Panc1 (cell line): ENCODE measurements at regions of chr5 and their contacts with region 1.

Region 1: DNA sequence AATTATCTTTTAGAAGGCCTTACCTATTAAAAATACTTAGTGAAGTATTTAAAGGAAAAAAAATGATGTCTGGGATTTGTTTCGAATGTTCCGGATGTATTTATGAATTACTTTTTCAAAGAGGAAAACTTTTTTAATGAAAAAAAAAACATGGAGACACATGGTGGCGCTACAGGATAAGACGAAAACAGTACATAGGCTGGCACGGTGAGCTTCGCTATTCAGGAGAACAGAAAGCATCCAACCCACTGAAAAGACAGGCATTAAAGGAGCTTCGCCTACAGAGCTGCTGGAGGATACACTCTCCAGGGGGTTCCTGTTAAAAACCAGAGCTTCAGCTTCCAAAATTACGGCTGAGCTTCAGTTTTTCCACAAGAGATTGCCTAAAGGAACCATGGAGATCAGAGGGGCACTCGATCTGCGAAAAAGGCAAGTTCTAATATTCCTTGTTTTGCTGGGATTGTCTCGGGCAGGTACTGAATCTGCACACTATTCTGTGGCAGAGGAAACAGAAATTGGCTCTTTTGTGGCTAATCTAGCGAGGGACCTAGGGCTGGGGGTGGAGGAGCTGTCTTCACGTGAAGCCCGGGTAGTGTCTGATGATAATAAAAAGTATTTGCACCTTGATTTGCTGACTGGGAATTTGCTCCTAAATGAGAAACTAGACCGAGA is at the start of gene PCDHB14:
- DNase-seq: peak; percentile 22
- ATAC-seq: peak; percentile 94
- H3K4me3 ChIP-seq: peak within 1 kb of the TSS; percentile 35 to 51
- H3K27ac ChIP-seq: no peak within 1 kb of the TSS
- H3K4me1 ChIP-seq: no peaks in the 10 kb centered on the region
- H3K27me3 ChIP-seq: peaks cover 3% of the 10 kb centered on the region; the same call in 1 of the 2 replicates
- CTCF ChIP-seq: peak; percentile 72
- total RNA-seq, gene PCDHB14: 0.80 TPM

Region 2: GRCh38 chr5:141326088-141326854 is 103.0 kb after region 1 on chr5:
- CTCF ChIA-PET with region 1: interaction called, 11 read pairs
- POLR2A ChIA-PET with region 1: no interaction called
- in situ Hi-C with region 1: no loop called
- intact Hi-C with region 1: no loop called
- DNase-seq: no peak
- ATAC-seq: peak; percentile 94
- H3K4me3 ChIP-seq: peak overlapping the region; percentile 50 to 77
- H3K27ac ChIP-seq: peak overlapping the region; percentile 73
- H3K4me1 ChIP-seq: no peaks in the 10 kb centered on the region
- H3K27me3 ChIP-seq: no peaks in the 10 kb centered on the region
- CTCF ChIP-seq: peak; percentile 82

Region 3: DNA sequence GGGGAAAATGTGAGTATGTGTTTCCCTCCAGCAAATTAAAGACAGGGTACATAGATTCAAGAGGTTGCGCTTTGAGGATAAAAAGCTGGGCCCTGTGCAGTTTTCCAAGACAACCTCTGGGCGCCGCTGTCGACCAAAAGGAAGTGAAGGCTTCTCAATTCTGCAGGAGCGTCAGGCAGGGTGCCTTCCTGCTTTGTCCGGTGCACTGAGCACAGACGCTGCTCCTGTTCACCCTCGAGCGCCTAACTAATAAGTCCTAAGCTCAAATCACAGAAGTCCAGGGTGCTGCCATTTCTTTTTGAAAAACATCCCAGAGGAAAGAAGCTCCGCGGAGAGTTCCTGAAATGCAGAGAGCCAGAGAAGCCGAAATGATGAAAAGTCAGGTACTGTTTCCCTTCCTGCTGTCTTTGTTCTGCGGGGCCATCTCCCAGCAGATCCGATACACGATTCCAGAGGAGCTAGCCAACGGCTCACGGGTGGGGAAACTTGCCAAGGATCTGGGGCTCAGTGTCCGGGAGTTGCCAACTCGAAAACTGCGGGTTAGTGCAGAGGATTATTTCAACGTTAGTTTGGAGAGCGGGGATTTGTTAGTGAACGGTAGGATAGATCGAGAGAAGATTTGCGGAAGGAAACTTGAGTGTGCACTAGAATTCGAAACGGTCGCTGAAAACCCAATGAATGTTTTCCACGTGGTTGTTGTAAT is 126.8 kb after region 1 on chr5 and contains the start of gene PCDHGB1:
- CTCF ChIA-PET with region 1: interaction called, 10 read pairs
- POLR2A ChIA-PET with region 1: no interaction called
- in situ Hi-C with region 1: no loop called
- intact Hi-C with region 1: no loop called
- DNase-seq: no peak
- ATAC-seq: peak; percentile 97
- H3K4me3 ChIP-seq: peak within 1 kb of the TSS; percentile 51 to 68
- H3K27ac ChIP-seq: peak within 1 kb of the TSS; percentile 5; the same call in 1 of the 2 replicates
- H3K4me1 ChIP-seq: no peaks in the 10 kb centered on the region
- H3K27me3 ChIP-seq: no peaks in the 10 kb centered on the region; the same call in 1 of the 2 replicates
- CTCF ChIP-seq: peak; percentile 81
- total RNA-seq, gene PCDHGB1: 2.0 TPM

Region 4: GRCh38 chr5:141557681-141558136 is 334.5 kb after region 1 on chr5:
- CTCF ChIA-PET with region 1: interaction called, 12 read pairs
- POLR2A ChIA-PET with region 1: interaction called, 3 read pairs
- in situ Hi-C with region 1: no loop called
- intact Hi-C with region 1: loop called (anchors 5 kb)
- DNase-seq: peak; percentile 82
- ATAC-seq: peak; percentile 92
- H3K4me3 ChIP-seq: peak overlapping the region; percentile 26 to 54
- H3K27ac ChIP-seq: peak overlapping the region; percentile 84
- H3K4me1 ChIP-seq: peaks cover 17% of the 10 kb centered on the region
- H3K27me3 ChIP-seq: no peaks in the 10 kb centered on the region
- CTCF ChIP-seq: peak; percentile 92

Region 5: DNA sequence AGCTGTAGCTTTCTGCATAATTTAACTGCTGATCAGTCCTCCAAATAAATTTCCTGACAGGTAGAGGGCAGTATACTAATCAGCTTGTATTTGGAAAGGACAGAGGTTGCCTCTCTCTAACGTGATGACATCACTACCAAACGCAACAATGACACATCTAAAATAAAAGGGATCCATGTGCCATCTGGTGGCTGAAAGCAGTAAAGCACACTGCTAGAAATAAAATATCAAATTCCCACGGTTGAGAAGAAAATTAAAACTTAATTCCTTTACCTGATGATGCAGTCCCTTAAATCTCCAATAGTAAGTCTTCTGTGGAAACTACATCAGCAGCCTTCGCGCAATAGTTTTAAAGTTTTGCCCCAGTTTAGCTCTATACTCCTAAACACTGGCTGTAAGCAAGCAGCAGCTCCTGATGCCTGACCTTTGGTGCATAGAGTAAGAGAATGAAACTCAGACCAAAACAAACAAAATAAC is 341.0 kb after region 1 on chr5:
- CTCF ChIA-PET with region 1: interaction called, 9 read pairs
- POLR2A ChIA-PET with region 1: no interaction called
- in situ Hi-C with region 1: no loop called
- intact Hi-C with region 1: loop called (anchors 5 kb)
- DNase-seq: peak; percentile 87
- ATAC-seq: peak; percentile 90
- H3K4me3 ChIP-seq: no peak overlapping the region
- H3K27ac ChIP-seq: peak overlapping the region; percentile 83
- H3K4me1 ChIP-seq: peaks cover 12% of the 10 kb centered on the region
- H3K27me3 ChIP-seq: no peaks in the 10 kb centered on the region
- CTCF ChIP-seq: peak; percentile 91

Region 6: GRCh38 chr5:141713616-141714309 is 490.5 kb after region 1 on chr5:
- CTCF ChIA-PET with region 1: no interaction called
- POLR2A ChIA-PET with region 1: no interaction called
- in situ Hi-C with region 1: no loop called
- intact Hi-C with region 1: no loop called
- DNase-seq: no peak
- ATAC-seq: peak; percentile 71
- H3K4me3 ChIP-seq: no peak overlapping the region
- H3K27ac ChIP-seq: peak overlapping the region; percentile 83
- H3K4me1 ChIP-seq: peaks cover 37% of the 10 kb centered on the region
- H3K27me3 ChIP-seq: no peaks in the 10 kb centered on the region
- CTCF ChIP-seq: no peak